T-cell (primary cell): ENCODE measurements at regions of chr2 and their contacts with region 1.

Region 1: GRCh38 chr2:197293252-197294007 is 17.1 kb downstream of the ANKRD44 start:
- DNase-seq: peak in 10 of 35 experiments; percentile 12 to 63 (median 22)
- ATAC-seq: peak; percentile 63 to 74 (median 64)
- H3K4me3 ChIP-seq: peak overlapping the region; percentile 30 to 31
- H3K4me3 Mint-ChIP-seq: peak overlapping the region; percentile 65 to 92 (median 78)
- H3K27ac ChIP-seq: peak overlapping the region; percentile 79
- H3K27ac Mint-ChIP-seq: peak overlapping the region; percentile 96 to 99
- H3K4me1 ChIP-seq: peaks cover 57 to 60% of the 10 kb centered on the region in 2 experiments
- H3K4me1 Mint-ChIP-seq: peaks cover 92 to 95% (median 94%) of the 10 kb centered on the region in 3 donors
- H3K27me3 ChIP-seq: no peaks in the 10 kb centered on the region
- H3K27me3 Mint-ChIP-seq: no peaks in the 10 kb centered on the region

Region 2: DNA sequence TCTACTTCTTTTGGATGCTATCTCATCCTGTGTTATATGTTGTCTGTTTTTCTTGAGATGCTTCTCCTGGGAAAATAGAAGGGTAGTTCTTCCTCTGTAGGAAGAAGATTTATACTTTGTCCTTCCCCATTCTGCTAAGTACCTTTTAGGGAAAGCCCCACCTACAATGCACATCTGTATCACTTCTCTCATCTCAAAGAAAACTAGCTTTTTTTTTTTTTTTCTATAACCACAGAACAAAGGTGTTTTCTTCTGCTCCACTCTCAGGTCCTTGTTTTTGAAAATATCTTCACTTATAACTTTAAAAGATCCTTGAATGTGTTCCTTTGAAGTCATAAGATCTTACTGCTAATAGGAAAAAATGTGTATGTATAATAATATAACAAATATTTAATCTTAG is 623.1 kb before region 1 on chr2:
- CTCF ChIA-PET with region 1: no interaction called
- POLR2A ChIA-PET with region 1: no interaction called
- DNase-seq: no peak
- ATAC-seq: no peak
- H3K4me3 ChIP-seq: no peak overlapping the region
- H3K4me3 Mint-ChIP-seq: no peak overlapping the region
- H3K27ac ChIP-seq: no peak overlapping the region
- H3K27ac Mint-ChIP-seq: no peak overlapping the region
- H3K4me1 ChIP-seq: no peaks in the 10 kb centered on the region
- H3K4me1 Mint-ChIP-seq: no peaks in the 10 kb centered on the region
- H3K27me3 ChIP-seq: no peaks in the 10 kb centered on the region
- H3K27me3 Mint-ChIP-seq: no peaks in the 10 kb centered on the region

Region 3: DNA sequence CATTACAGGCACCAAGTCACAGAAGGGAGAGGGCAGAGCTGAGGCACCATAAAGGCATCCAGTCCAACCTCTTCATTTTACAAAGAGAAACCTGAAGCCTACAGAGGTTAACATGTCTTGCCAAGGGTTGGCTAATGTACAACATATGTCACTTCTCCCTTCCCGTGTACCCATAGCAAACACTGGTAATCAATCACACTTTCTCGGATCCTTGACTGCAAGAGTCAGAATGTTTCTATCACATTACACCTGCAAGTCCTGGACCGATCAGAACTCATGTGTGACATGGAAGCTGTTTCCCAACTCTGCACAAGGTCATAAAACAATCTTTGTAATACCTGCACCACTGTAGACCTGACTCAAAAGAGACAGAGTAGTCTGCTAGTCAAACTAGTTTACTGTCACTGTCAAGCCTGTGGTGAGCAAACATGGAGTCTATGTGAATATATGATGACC is 11.2 kb after region 1 on chr2:
- CTCF ChIA-PET with region 1: interaction called in 1 of 2 experiments, 12 read pairs
- POLR2A ChIA-PET with region 1: interaction called, 4 to 19 read pairs
- DNase-seq: peak in 1 of 35 experiments; percentile 35
- ATAC-seq: peak in 2 of 4 experiments; percentile 28 to 34
- H3K4me3 ChIP-seq: peak overlapping the region; percentile 2 to 59
- H3K4me3 Mint-ChIP-seq: peak overlapping the region; percentile 58 to 92 (median 78)
- H3K27ac ChIP-seq: peak overlapping the region; percentile 79
- H3K27ac Mint-ChIP-seq: peak overlapping the region; percentile 99
- H3K4me1 ChIP-seq: peaks cover 65 to 74% of the 10 kb centered on the region in 2 experiments
- H3K4me1 Mint-ChIP-seq: peaks cover 87 to 94% (median 91%) of the 10 kb centered on the region in 3 donors
- H3K27me3 ChIP-seq: no peaks in the 10 kb centered on the region
- H3K27me3 Mint-ChIP-seq: no peaks in the 10 kb centered on the region